ENCODE measurements at regions of chr16 and their contacts with region 1.

Region 1: DNA sequence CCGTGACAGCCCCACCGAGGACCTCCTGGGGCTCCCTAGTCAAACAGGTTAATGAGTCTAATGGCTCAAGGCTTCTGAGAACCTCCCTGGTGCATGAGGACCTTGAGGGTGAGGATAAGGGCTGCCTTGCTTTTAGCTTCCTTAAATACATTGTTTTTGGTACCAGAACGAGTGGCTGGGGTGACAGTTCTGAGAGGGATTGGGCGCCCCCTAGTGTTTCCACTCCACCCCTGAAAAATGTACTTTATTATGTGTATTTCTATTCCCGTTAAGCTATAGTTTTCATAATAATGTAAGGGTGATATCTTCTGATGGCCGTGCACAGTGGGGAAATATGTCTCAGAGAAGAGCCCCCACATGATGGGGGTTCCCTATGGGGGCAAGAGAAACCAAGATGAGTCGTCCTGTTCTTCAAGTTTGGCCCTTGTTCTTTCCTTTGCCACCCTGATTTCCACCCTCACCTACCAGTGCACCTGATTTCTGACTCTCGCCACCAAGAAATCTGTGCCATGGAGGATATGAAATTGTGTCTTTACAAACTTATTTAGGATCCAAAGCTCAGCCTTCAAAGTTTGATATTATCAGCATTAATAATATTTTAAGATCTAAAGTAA is 14.5 kb upstream of the VWA3A start:
- DNase-seq: no peak
- H3K4me3 ChIP-seq: no peak overlapping the region
- CTCF ChIP-seq: peak; percentile 72

Region 2: GRCh38 chr16:21964353-21964752 is 113.5 kb before region 1 on chr16:
- CTCF ChIA-PET with region 1: interaction called, 24 read pairs
- POLR2A ChIA-PET with region 1: no interaction called
- DNase-seq: no peak
- H3K4me3 ChIP-seq: no peak overlapping the region
- CTCF ChIP-seq: no peak

Region 3: DNA sequence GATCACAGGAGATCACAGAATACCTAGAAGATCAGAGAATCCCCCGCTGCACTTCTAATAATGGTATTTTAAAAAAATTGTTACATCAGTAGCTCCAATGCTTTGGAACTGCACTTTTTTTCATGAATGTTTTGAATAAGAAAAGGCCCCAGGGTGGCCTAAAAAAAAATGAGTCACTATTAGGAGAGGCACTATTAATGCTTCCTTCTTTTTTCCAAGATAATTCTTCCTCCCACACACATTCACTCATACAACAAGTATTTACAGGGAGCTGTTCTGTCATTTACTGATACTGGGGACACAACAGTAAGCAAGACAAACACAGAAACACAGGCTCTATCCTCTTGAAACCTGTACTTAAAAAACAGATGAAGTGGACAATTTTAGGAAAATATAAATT is 76.2 kb before region 1 on chr16:
- CTCF ChIA-PET with region 1: interaction called, 292 read pairs
- POLR2A ChIA-PET with region 1: no interaction called
- DNase-seq: peak; percentile 12
- H3K4me3 ChIP-seq: no peak overlapping the region
- CTCF ChIP-seq: no peak

Region 4: GRCh38 chr16:22027633-22028032 is 50.2 kb before region 1 on chr16:
- CTCF ChIA-PET with region 1: interaction called, 24 read pairs
- POLR2A ChIA-PET with region 1: no interaction called
- DNase-seq: no peak
- H3K4me3 ChIP-seq: no peak overlapping the region
- CTCF ChIP-seq: no peak

Region 5: GRCh38 chr16:22063888-22064467 is 13.8 kb before region 1 on chr16:
- CTCF ChIA-PET with region 1: interaction called, 98 read pairs
- POLR2A ChIA-PET with region 1: no interaction called
- DNase-seq: no peak
- H3K4me3 ChIP-seq: no peak overlapping the region
- CTCF ChIP-seq: no peak

Region 6: GRCh38 chr16:22190776-22191531 is 113.1 kb after region 1 on chr16:
- CTCF ChIA-PET with region 1: interaction called, 32 read pairs
- POLR2A ChIA-PET with region 1: no interaction called
- DNase-seq: peak; percentile 97
- H3K4me3 ChIP-seq: peak overlapping the region; percentile 69
- CTCF ChIP-seq: no peak

Region 7: GRCh38 chr16:22250522-22250921 is 172.7 kb after region 1 on chr16:
- CTCF ChIA-PET with region 1: no interaction called
- POLR2A ChIA-PET with region 1: no interaction called
- DNase-seq: no peak
- H3K4me3 ChIP-seq: no peak overlapping the region
- CTCF ChIP-seq: no peak

Measured in AG04449 (cell line).